CD4-positive, alpha-beta memory T cell (primary cell): ENCODE measurements at regions of chr10 and their contacts with region 1.

Region 1: DNA sequence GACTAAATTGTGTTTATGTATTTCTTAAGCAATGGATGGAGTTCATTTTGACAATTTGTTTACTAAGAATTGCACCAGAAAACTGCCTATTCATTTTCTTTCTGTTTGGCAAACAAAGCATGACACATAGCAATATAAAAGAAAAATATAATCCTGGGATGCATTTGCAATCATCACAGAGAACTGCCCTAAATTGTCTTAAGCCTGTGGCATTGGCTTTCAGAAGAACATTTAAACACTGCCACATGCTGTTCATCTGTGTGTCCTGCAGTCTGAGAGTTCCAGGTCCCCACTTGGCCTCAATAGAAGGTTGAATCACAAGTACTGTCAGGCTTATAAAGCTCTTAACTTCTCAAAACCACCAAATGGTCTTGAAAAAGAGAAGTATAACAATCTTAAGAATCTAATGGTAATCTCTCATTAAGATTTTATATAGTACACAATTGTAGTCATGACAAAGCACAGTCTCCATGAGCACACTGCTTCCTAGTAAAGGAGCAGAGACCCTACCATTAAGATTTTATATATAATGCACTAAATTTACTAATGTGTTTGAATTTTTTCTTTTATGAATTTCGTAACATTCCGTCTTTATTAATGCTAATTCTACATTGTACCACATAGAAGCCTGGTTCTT is 29.9 kb downstream of the RNLS start:
- DNase-seq: peak; percentile 43 to 52 (median 49)
- H3K4me3 ChIP-seq: no peak overlapping the region
- H3K4me3 Mint-ChIP-seq: no peak overlapping the region
- H3K27ac ChIP-seq: no peak overlapping the region
- H3K27ac Mint-ChIP-seq: no peak overlapping the region
- H3K4me1 ChIP-seq: no peaks in the 10 kb centered on the region
- H3K4me1 Mint-ChIP-seq: no peaks in the 10 kb centered on the region
- H3K27me3 ChIP-seq: no peaks in the 10 kb centered on the region
- H3K27me3 Mint-ChIP-seq: no peaks in the 10 kb centered on the region

Region 2: GRCh38 chr10:87659571-87660483 is 893.4 kb before region 1 on chr10 and contains the start of gene PAPSS2:
- CTCF ChIA-PET with region 1: interaction called, 6 read pairs
- POLR2A ChIA-PET with region 1: no interaction called
- intact Hi-C with region 1: loop called (anchors 1 kb)
- DNase-seq: peak in 3 of 5 donors; percentile 4 to 13 (median 6)
- H3K4me3 ChIP-seq: peak within 1 kb of the TSS in 1 of 2 donors; percentile 6
- H3K4me3 Mint-ChIP-seq: peak within 1 kb of the TSS; percentile 73 to 87 (median 82)
- H3K27ac ChIP-seq: no peak within 1 kb of the TSS
- H3K27ac Mint-ChIP-seq: no peak within 1 kb of the TSS
- H3K4me1 ChIP-seq: peaks cover 7% of the 10 kb centered on the region
- H3K4me1 Mint-ChIP-seq: peaks cover 8 to 20% (median 11%) of the 10 kb centered on the region in 4 donors
- H3K27me3 ChIP-seq: peaks cover 23% of the 10 kb centered on the region
- H3K27me3 Mint-ChIP-seq: peaks cover 35 to 44% of the 10 kb centered on the region in 2 donors
- total RNA-seq, gene PAPSS2: 0.42 to 0.73 TPM

Region 3: GRCh38 chr10:87850742-87851205 is 702.5 kb before region 1 on chr10:
- CTCF ChIA-PET with region 1: interaction called, 51 read pairs
- POLR2A ChIA-PET with region 1: no interaction called
- intact Hi-C with region 1: loop called (anchors 1 kb)
- DNase-seq: peak; percentile 38 to 59 (median 52)
- H3K4me3 ChIP-seq: no peak overlapping the region
- H3K4me3 Mint-ChIP-seq: no peak overlapping the region
- H3K27ac ChIP-seq: no peak overlapping the region
- H3K27ac Mint-ChIP-seq: no peak overlapping the region
- H3K4me1 ChIP-seq: peaks cover 6% of the 10 kb centered on the region
- H3K4me1 Mint-ChIP-seq: peaks cover 8 to 14% (median 9%) of the 10 kb centered on the region in 4 donors
- H3K27me3 ChIP-seq: no peaks in the 10 kb centered on the region
- H3K27me3 Mint-ChIP-seq: no peaks in the 10 kb centered on the region

Region 4: DNA sequence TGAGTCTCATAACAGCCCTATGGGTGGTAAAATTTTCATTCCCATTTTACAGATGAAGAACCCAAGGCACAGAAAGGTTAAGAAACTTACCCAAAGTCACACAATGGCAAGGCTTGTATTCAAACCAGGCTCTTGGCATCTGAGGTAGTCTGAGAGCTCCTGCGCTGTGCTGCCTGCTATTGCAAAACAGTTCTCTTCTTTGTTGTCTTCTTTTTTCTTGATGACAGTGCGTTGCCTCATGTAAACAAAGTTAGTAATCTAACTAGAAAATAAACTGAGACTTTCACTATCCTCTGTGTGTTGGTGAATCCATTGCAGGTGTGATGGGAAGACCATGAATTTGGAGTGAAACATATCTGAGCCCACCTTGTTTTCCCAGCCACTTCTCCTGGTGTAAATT is 449.0 kb before region 1 on chr10:
- CTCF ChIA-PET with region 1: no interaction called
- POLR2A ChIA-PET with region 1: no interaction called
- intact Hi-C with region 1: no loop called
- DNase-seq: no peak
- H3K4me3 ChIP-seq: no peak overlapping the region
- H3K4me3 Mint-ChIP-seq: no peak overlapping the region
- H3K27ac ChIP-seq: no peak overlapping the region
- H3K27ac Mint-ChIP-seq: peak overlapping the region in 1 of 7 donors; percentile 29
- H3K4me1 ChIP-seq: no peaks in the 10 kb centered on the region
- H3K4me1 Mint-ChIP-seq: peaks cover 8 to 14% (median 9%) of the 10 kb centered on the region in 4 donors
- H3K27me3 ChIP-seq: no peaks in the 10 kb centered on the region
- H3K27me3 Mint-ChIP-seq: no peaks in the 10 kb centered on the region

Region 5: GRCh38 chr10:88114368-88114767 is 438.9 kb before region 1 on chr10:
- CTCF ChIA-PET with region 1: interaction called, 4 read pairs
- POLR2A ChIA-PET with region 1: no interaction called
- intact Hi-C with region 1: loop called (anchors 1 kb)
- DNase-seq: peak in 2 of 5 donors; percentile 13 to 18
- H3K4me3 ChIP-seq: no peak overlapping the region
- H3K4me3 Mint-ChIP-seq: no peak overlapping the region
- H3K27ac ChIP-seq: no peak overlapping the region
- H3K27ac Mint-ChIP-seq: peak overlapping the region in 2 of 7 donors; percentile 4 to 13
- H3K4me1 ChIP-seq: peaks cover 32% of the 10 kb centered on the region
- H3K4me1 Mint-ChIP-seq: peaks cover 7 to 17% (median 10%) of the 10 kb centered on the region in 4 donors
- H3K27me3 ChIP-seq: no peaks in the 10 kb centered on the region
- H3K27me3 Mint-ChIP-seq: peaks cover 0 to 1% of the 10 kb centered on the region in 2 donors